K562 (cell line): ENCODE measurements at regions of chr2 and their contacts with region 1.

Region 1: GRCh38 chr2:113889471-113890252 is at the start of gene ACTR3:
- DNase-seq: peak; percentile 95 to 99 (median 96)
- ATAC-seq: peak; percentile 88
- H3K4me3 ChIP-seq: peak within 1 kb of the TSS; percentile 86
- H3K27ac ChIP-seq: peak within 1 kb of the TSS; percentile 95
- H3K4me1 ChIP-seq: peaks cover 15 to 26% of the 10 kb centered on the region in 2 experiments
- H3K27me3 ChIP-seq: no peaks in the 10 kb centered on the region
- CTCF ChIP-seq: no peak; a peak in 1 of 6 replicates
- EP300 ChIP-seq: no peak; the same call in none of the 2 replicates
- POLR2A ChIP-seq: peak; percentile 97
- RAD21 ChIP-seq: no peak; a peak in 1 of 4 replicates
- polyA plus RNA-seq, gene ACTR3: 49.0 to 65.1 TPM

Region 2: DNA sequence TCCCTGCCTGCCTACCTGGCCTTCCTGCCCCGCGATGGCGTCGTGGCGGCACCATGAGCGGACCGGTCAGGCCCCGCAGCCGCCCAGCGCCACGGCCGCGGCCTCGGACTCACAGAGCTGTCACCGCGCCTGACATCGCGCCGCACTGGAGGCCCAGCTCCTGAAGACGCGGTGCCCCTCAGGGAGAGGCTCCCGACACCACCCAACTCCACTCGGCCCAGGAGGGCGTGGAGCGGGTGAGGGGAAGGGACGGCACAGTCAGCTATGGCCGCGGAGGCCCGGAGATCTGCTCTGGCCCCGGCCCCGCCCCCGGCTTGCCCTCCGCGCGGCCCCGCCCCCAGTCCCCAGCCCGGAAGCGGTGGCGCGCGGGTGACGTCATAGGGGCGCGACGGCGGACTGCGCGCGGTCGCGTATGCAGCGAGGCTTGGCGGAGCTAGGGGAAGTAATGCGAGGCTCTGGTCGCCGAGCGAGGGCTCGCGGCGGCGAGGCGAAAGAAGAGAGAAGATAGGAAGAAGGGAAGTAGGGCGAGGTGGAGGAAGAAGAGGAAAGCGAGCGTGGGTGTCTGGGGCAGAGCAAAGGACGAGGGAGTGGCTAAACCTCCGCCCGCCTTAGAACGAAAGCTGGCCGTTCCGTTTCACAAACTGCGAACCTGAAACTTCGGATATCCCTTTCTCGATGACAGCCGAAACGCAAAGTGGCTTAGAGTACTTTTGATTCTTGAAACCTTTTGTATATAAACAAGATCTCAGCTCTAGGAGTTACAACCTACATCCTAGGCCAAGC is 133.1 kb before region 1 on chr2 and contains the start of gene SLC35F5:
- CTCF ChIA-PET with region 1: no interaction called
- POLR2A ChIA-PET with region 1: interaction called, 11 read pairs
- in situ Hi-C with region 1: no loop called
- intact Hi-C with region 1: loop called (anchors 2 kb)
- DNase-seq: peak; percentile 91 to 95 (median 94)
- ATAC-seq: peak; percentile 98
- H3K4me3 ChIP-seq: peak within 1 kb of the TSS; percentile 96
- H3K27ac ChIP-seq: peak within 1 kb of the TSS; percentile 97
- H3K4me1 ChIP-seq: peaks cover 3 to 18% of the 10 kb centered on the region in 2 experiments; a peak in 2 of 5 replicates
- H3K27me3 ChIP-seq: no peaks in the 10 kb centered on the region
- CTCF ChIP-seq: no peak
- EP300 ChIP-seq: no peak
- POLR2A ChIP-seq: peak; percentile 98
- RAD21 ChIP-seq: no peak; a peak in 2 of 4 replicates
- polyA plus RNA-seq, gene SLC35F5: 4.9 to 7.4 TPM

Region 3: GRCh38 chr2:113822087-113822815 is 67.4 kb before region 1 on chr2:
- CTCF ChIA-PET with region 1: no interaction called
- POLR2A ChIA-PET with region 1: interaction called, 3 read pairs
- in situ Hi-C with region 1: no loop called
- intact Hi-C with region 1: loop called (anchors 5 kb)
- DNase-seq: peak in 1 of 4 experiments; percentile 53
- ATAC-seq: peak; percentile 19; the same call in 1 of the 3 replicates
- H3K4me3 ChIP-seq: no peak overlapping the region
- H3K27ac ChIP-seq: no peak overlapping the region
- H3K4me1 ChIP-seq: peaks cover 0 to 22% of the 10 kb centered on the region in 2 experiments; a peak in 3 of 5 replicates
- H3K27me3 ChIP-seq: no peaks in the 10 kb centered on the region
- CTCF ChIP-seq: no peak
- EP300 ChIP-seq: peak; percentile 82
- POLR2A ChIP-seq: no peak
- RAD21 ChIP-seq: no peak

Region 4: GRCh38 chr2:113876503-113877387 is 12.9 kb before region 1 on chr2:
- CTCF ChIA-PET with region 1: no interaction called
- POLR2A ChIA-PET with region 1: interaction called, 75 read pairs
- in situ Hi-C with region 1: no loop called
- intact Hi-C with region 1: no loop called
- DNase-seq: peak in 2 of 4 experiments; percentile 37 to 56
- ATAC-seq: peak; percentile 85
- H3K4me3 ChIP-seq: no peak overlapping the region
- H3K27ac ChIP-seq: no peak overlapping the region
- H3K4me1 ChIP-seq: peaks cover 6 to 10% of the 10 kb centered on the region in 2 experiments; a peak in 3 of 5 replicates
- H3K27me3 ChIP-seq: no peaks in the 10 kb centered on the region
- CTCF ChIP-seq: 0 out of 6 replicates have a peak, but pooled peaks of 1 of the 3 experiments have one; percentile 14
- EP300 ChIP-seq: 0 out of 2 replicates have a peak, but pooled peaks have one; percentile 15
- POLR2A ChIP-seq: no peak
- RAD21 ChIP-seq: no peak

Region 5: DNA sequence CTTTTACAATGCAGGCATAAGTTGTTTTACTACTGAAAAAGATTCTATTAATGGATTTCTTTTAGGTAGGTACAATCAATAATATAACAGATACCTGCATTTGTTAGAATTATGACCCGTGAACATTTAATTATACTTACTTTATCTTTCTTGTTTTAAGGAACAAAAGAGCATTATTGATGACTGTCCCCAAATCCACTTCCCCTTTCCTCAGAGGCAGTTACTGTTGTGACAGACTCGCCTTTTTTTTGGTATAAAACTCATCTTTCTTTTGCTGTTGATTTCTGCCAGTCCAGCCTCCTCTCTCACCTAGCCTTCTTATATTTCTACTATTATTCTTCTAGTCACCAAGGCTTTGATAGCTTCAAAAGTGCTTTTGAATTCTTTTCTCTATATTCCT is 12.3 kb after region 1 on chr2:
- CTCF ChIA-PET with region 1: no interaction called
- POLR2A ChIA-PET with region 1: interaction called, 39 read pairs
- in situ Hi-C with region 1: no loop called
- intact Hi-C with region 1: no loop called
- DNase-seq: no peak
- ATAC-seq: peak; percentile 47
- H3K4me3 ChIP-seq: no peak overlapping the region
- H3K27ac ChIP-seq: no peak overlapping the region
- H3K4me1 ChIP-seq: peaks cover 5 to 7% of the 10 kb centered on the region in 2 experiments; a peak in 3 of 5 replicates
- H3K27me3 ChIP-seq: no peaks in the 10 kb centered on the region
- CTCF ChIP-seq: no peak
- EP300 ChIP-seq: no peak
- POLR2A ChIP-seq: no peak
- RAD21 ChIP-seq: no peak

Region 6: DNA sequence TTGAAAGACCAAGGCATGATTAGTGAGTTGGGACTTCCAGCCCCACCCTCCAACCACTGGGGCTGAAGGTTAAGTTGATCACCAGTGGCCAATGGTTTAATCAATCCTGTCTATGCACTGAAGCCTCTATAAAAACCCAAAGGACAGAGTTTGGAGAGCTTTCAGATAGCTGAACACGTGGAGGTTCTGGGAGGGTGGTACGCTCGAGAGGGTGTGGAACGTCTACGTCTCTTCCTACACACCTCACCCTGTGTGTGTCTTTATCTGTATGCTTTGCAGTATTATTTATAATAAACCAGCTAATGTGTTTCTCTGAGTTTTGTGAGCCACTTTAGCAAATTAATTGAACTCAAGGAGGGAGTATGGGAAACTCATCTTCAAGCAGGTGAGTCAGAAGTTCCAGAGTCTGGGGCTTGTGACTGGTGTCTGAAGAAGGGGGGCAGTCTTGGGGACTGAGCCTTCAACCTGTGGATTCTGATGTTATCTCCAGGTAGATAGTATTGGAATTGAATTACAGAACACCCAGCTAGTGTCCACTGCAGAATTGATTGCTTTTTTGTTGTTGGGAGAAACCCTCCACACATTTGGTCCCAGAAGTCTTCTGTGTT is 20.6 kb after region 1 on chr2:
- CTCF ChIA-PET with region 1: no interaction called
- POLR2A ChIA-PET with region 1: interaction called, 39 read pairs
- in situ Hi-C with region 1: no loop called
- intact Hi-C with region 1: loop called (anchors 2 kb)
- DNase-seq: peak in 1 of 4 experiments; percentile 26
- ATAC-seq: peak; percentile 68
- H3K4me3 ChIP-seq: no peak overlapping the region
- H3K27ac ChIP-seq: peak overlapping the region; percentile 21; the same call in 2 of the 3 replicates
- H3K4me1 ChIP-seq: peaks cover 11 to 14% of the 10 kb centered on the region in 2 experiments; a peak in 4 of 5 replicates
- H3K27me3 ChIP-seq: no peaks in the 10 kb centered on the region
- CTCF ChIP-seq: no peak
- EP300 ChIP-seq: no peak
- POLR2A ChIP-seq: no peak
- RAD21 ChIP-seq: no peak

Region 7: DNA sequence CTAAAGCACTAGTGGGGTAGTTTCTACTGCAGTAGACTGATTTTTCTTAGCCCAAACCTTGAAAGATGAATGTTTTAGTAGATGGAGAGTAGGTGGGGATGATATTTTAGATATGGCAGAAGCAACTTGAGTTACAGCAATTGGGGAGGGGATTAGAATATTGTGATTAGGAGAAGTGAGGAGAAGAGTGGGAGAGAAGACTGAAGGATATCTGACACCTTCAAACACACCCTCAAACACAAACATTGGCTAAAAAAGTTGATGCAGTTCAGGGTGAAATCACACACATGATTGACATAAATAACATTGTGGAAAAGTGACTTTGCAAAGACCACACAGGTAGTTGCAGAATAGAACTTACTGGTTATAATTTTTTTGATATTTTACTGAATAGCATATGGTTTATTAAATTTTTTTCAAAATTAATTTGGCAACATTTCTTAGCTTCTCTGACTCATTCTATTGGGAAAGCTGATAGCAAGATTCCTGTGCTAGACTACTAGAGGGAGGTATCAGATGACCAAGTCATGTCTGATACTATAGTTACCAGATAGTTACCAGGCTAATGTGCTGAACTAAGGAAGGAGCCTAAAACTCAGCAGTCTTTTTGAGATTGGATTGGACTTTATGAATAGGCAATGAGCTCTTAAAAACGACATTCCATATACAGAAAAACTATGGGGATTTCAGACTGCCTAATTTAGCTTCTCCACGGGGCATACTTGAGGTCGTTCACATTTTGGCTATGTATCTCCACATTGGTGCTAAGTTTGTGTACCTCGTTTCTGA is 73.2 kb after region 1 on chr2:
- CTCF ChIA-PET with region 1: no interaction called
- POLR2A ChIA-PET with region 1: interaction called, 5 read pairs
- in situ Hi-C with region 1: no loop called
- intact Hi-C with region 1: loop called (anchors 2 kb)
- DNase-seq: no peak
- ATAC-seq: peak; percentile 32; the same call in 2 of the 3 replicates
- H3K4me3 ChIP-seq: no peak overlapping the region
- H3K27ac ChIP-seq: no peak overlapping the region
- H3K4me1 ChIP-seq: no peaks in the 10 kb centered on the region
- H3K27me3 ChIP-seq: no peaks in the 10 kb centered on the region
- CTCF ChIP-seq: no peak
- EP300 ChIP-seq: no peak
- POLR2A ChIP-seq: peak; percentile 60
- RAD21 ChIP-seq: no peak